Right cardiac atrium (tissue), 5 donors: ENCODE measurements at regions of chr13 and their contacts with region 1.

Region 1: GRCh38 chr13:46126552-46127357 is 21.9 kb upstream of the CPB2 start:
- DNase-seq: peak; percentile 51 to 82 (median 70)
- ATAC-seq: peak; percentile 81
- H3K4me3 ChIP-seq: no peak overlapping the region
- H3K27ac ChIP-seq: no peak overlapping the region
- H3K4me1 ChIP-seq: no peaks in the 10 kb centered on the region
- H3K27me3 ChIP-seq: no peaks in the 10 kb centered on the region

Region 2: GRCh38 chr13:45807520-45808099 is 319.1 kb before region 1 on chr13:
- intact Hi-C with region 1: loop called in 1 of 4 experiments (anchors 10 kb)
- DNase-seq: no peak
- ATAC-seq: peak in 1 of 2 donors; percentile 54
- H3K4me3 ChIP-seq: no peak overlapping the region
- H3K27ac ChIP-seq: no peak overlapping the region
- H3K4me1 ChIP-seq: no peaks in the 10 kb centered on the region
- H3K27me3 ChIP-seq: no peaks in the 10 kb centered on the region